Activated CD8-positive, alpha-beta T cell treated with anti-CD3 and anti-CD28 coated beads, Interleukin-2, amount 10 ng/mL, durations not matched to agents 7 days and 5 days (primary cell): ENCODE measurements at regions of chr6 and their contacts with region 1.

Region 1: GRCh38 chr6:149746147-149746946 is at the start of gene NUP43:
- DNase-seq: peak; percentile 96
- ATAC-seq: peak; percentile 69
- H3K4me3 Mint-ChIP-seq: peak within 1 kb of the TSS; percentile 98
- H3K27ac Mint-ChIP-seq: peak within 1 kb of the TSS; percentile 94
- H3K4me1 Mint-ChIP-seq: peaks cover 35% of the 10 kb centered on the region
- H3K27me3 Mint-ChIP-seq: no peaks in the 10 kb centered on the region
- total RNA-seq, gene NUP43: 67.7 to 69.4 TPM

Region 2: DNA sequence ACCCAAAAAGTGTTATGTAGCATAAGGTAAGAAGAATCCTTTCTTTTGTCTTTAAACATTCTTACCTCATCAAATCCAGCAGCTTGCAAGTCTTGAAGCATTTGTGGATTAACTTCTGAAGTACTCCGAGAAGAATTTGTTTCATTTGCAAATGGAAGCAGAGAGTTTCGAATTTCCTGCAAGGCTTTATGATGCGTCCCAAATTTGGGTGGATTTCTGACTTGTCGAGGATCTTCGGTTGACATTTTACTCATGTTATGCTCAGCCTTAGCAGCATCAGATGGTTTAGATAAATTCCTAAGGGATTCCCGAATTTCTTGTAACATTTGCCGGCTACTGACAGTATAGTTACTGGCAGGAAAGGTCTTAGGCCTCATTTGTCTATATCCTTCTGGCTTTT is 44.6 kb before region 1 on chr6:
- CTCF ChIA-PET with region 1: no interaction called
- POLR2A ChIA-PET with region 1: no interaction called
- DNase-seq: no peak
- ATAC-seq: no peak
- H3K4me3 Mint-ChIP-seq: no peak overlapping the region
- H3K27ac Mint-ChIP-seq: no peak overlapping the region
- H3K4me1 Mint-ChIP-seq: peaks cover 23% of the 10 kb centered on the region
- H3K27me3 Mint-ChIP-seq: no peaks in the 10 kb centered on the region

Region 3: DNA sequence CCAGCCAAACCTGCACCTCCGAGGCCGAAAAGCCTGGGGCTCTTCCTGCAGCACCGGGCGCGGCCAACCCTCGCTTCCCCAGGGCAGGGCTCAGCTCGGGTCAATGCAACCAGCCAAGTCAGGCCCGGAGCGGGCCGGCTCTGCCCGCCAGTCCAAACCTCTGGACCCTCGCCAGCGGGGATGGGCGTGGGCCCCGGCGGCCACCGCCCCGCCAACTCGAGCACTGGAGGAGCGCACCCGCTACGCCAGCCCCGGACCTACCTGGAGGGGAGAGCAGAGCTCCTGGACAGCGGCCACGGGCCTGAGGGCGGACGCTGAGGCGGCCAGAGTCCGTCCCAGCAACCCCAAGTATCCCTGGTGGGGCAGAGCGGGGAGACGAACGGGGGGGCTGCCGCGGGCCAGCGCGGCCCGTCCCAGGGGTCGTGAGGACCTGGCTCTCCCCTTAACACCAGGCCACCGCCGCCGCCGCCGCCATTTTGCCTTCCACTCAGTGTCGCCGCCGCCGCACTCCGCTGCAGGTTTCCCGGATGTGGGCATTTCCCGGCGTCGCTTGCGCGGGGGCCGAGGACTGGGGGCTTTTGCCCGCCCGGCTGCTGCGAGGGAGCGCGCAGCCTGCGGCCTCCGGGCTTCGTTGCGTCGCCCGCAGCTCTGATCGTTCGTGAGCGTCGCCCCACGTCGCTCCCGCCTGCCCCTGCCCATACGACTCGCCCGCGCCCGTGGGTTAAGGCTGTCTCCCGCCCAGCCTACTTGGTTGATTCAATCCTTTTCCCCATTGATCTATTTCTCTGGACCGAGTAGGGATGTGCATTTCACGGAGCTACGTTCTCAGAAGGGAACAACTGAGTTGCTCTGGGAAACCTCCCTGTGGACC is 28.5 kb before region 1 on chr6 and contains the start of gene LATS1:
- CTCF ChIA-PET with region 1: interaction called, 10 read pairs
- POLR2A ChIA-PET with region 1: interaction called, 24 read pairs
- DNase-seq: peak; percentile 95
- ATAC-seq: peak; percentile 90
- H3K4me3 Mint-ChIP-seq: peak within 1 kb of the TSS; percentile 90
- H3K27ac Mint-ChIP-seq: peak within 1 kb of the TSS; percentile 93
- H3K4me1 Mint-ChIP-seq: peaks cover 37% of the 10 kb centered on the region
- H3K27me3 Mint-ChIP-seq: no peaks in the 10 kb centered on the region
- total RNA-seq, gene LATS1: 33.2 to 33.9 TPM

Region 4: DNA sequence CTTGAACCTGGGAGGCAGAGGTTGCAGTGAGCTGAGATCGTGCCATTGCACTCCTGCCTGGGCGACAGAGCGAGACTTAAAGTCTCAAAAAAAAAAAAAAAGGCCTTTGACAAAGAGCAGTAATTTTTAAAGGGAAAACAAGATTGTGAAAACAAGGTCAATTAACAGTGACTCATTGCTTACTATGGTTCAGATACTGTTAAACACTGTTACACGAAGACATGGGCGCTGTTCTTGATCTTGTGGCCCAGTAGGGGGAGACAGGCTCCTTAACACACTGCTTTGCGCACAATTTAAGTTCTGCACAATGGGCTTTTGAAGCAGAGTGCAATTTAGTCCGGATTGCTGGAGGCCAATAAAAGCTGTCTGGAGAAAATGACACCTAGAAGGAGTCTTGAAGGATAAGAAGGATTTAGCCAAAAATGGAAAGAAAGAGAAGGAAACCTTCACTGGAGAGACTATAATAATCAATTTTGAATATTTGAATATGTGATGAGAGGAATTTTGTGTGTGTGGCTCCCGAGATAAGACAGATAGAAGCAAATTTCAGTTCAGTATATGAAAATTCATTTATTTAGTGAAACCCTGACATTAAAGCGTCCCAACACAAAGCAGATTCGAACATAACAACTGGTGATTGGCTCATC is 22.5 kb before region 1 on chr6:
- CTCF ChIA-PET with region 1: interaction called, 10 read pairs
- POLR2A ChIA-PET with region 1: interaction called, 24 read pairs
- DNase-seq: peak; percentile 64
- ATAC-seq: peak; percentile 82
- H3K4me3 Mint-ChIP-seq: no peak overlapping the region
- H3K27ac Mint-ChIP-seq: no peak overlapping the region
- H3K4me1 Mint-ChIP-seq: peaks cover 24% of the 10 kb centered on the region
- H3K27me3 Mint-ChIP-seq: no peaks in the 10 kb centered on the region

Region 5: DNA sequence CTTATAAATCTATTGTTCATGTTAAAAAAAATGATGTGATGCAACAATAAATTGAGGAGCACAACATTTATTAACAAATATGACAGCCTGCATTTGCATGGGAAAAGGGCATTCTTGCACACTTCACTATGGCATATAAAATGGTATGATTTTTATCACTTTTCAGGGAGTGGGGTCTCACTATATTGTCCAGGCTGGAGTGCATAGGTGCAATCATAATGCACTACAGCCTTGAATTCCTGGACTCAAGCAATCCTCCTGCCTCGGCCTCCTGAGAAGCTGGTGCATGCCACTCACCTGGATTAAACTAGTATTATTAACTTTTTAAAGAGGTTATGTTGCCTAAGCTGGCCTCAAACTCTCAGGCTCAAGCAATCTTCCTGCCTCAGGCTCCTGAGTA is 11.4 kb before region 1 on chr6:
- CTCF ChIA-PET with region 1: interaction called, 10 read pairs
- POLR2A ChIA-PET with region 1: no interaction called
- DNase-seq: no peak
- ATAC-seq: no peak
- H3K4me3 Mint-ChIP-seq: no peak overlapping the region
- H3K27ac Mint-ChIP-seq: no peak overlapping the region
- H3K4me1 Mint-ChIP-seq: peaks cover 6% of the 10 kb centered on the region
- H3K27me3 Mint-ChIP-seq: no peaks in the 10 kb centered on the region